ENCODE measurements at regions of chr13 and their contacts with region 1.

Region 1: DNA sequence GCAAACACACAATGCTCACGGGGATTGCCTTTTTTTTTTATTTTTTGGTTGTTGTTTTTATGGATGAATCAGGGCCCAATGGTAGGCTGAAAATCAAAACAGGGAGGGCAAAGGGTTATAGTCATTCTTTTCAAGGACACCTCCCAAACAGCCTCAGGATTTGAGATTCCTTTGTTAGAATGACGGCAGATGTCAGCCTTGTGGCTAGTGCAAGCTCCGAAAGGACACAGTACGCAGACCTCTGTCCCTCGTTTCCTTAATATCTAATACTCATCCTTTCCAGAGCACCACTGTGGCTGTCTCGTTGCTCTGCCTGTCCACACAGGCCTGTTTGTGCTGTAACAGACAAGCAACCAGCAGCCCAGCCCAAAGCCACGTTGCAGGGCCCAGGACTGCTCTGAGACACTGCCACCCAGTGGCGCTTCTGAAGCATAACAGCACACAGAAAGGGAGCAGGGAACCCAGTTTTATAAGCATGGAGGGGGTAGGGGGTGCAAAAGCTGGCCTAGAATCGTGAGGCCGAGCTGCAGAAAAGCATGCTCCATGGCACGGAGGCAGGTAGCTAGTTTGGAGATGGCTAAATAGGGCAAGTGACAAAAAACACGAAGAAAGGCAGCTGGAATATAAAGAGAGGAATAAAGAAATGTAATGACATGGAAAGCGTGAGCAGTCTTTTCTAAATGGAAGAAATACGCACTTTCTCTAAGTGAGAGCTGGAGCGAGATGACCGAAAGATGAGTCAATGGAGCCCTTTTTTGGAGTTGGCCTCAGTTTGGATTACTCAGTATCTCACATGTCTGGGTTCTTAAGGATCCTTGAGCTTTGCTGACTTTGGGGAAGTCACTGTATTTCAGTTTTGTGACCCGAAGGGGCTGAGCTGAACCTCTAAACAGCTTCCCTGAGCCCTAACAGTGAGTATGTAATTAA is 40.7 kb upstream of the MEDAG start:
- DNase-seq: peak; percentile 71 to 72
- H3K4me3 ChIP-seq: no peak overlapping the region
- H3K4me3 Mint-ChIP-seq: no peak overlapping the region
- H3K27ac Mint-ChIP-seq: peak overlapping the region; percentile 16
- H3K4me1 ChIP-seq: 0 out of 2 replicates have a peak, but pooled peaks cover 7% of the 10 kb centered on the region
- H3K4me1 Mint-ChIP-seq: peaks cover 12% of the 10 kb centered on the region
- H3K27me3 ChIP-seq: no peaks in the 10 kb centered on the region
- H3K27me3 Mint-ChIP-seq: peaks cover 2% of the 10 kb centered on the region
- CTCF ChIP-seq: peak; percentile 84 to 95

Region 2: GRCh38 chr13:30493658-30494381 is 371.6 kb before region 1 on chr13:
- CTCF ChIA-PET with region 1: no interaction called
- POLR2A ChIA-PET with region 1: interaction called, 11 read pairs
- intact Hi-C with region 1: no loop called
- DNase-seq: no peak
- H3K4me3 ChIP-seq: no peak overlapping the region
- H3K4me3 Mint-ChIP-seq: no peak overlapping the region
- H3K27ac Mint-ChIP-seq: no peak overlapping the region
- H3K4me1 ChIP-seq: no peaks in the 10 kb centered on the region
- H3K4me1 Mint-ChIP-seq: peaks cover 7% of the 10 kb centered on the region
- H3K27me3 ChIP-seq: no peaks in the 10 kb centered on the region
- H3K27me3 Mint-ChIP-seq: no peaks in the 10 kb centered on the region
- CTCF ChIP-seq: no peak

Region 3: DNA sequence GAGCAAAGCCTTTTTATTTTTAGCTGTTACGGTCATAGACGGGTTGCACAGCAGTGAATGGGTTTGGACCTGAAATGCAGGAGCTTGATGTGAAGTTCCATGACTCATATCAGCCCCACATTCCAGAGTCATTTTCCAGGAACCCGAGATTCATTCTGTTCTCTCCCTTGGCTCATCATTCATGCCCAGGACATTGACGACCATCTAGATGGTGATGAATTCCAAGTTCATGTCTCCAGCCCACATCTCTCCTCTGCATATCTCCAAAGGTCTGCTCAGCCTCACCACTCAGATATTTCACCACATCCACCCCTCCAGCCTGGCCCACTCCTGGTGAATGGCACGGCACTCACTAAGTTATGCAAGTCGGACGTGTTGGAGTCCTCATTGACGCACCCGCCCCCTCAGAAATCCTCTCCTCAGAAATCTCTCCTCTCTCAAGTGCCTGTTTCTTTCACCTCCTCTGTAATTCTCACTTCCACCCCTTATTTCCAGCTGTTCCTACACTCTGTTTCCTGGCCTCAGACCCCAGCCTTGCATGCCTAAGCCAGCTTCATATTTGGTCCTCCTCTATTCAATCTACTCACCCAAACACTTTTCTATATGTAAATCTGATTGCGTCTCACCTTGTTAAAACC is 46.9 kb before region 1 on chr13:
- CTCF ChIA-PET with region 1: no interaction called
- POLR2A ChIA-PET with region 1: no interaction called
- intact Hi-C with region 1: no loop called
- DNase-seq: no peak
- H3K4me3 ChIP-seq: no peak overlapping the region
- H3K4me3 Mint-ChIP-seq: no peak overlapping the region
- H3K27ac Mint-ChIP-seq: no peak overlapping the region
- H3K4me1 ChIP-seq: peaks cover 16% of the 10 kb centered on the region
- H3K4me1 Mint-ChIP-seq: peaks cover 17% of the 10 kb centered on the region
- H3K27me3 ChIP-seq: no peaks in the 10 kb centered on the region; the same call in 1 of the 2 replicates
- H3K27me3 Mint-ChIP-seq: no peaks in the 10 kb centered on the region
- CTCF ChIP-seq: no peak

Region 4: GRCh38 chr13:31044377-31045285 is 179.2 kb after region 1 on chr13:
- CTCF ChIA-PET with region 1: interaction called, 6 read pairs
- POLR2A ChIA-PET with region 1: no interaction called
- intact Hi-C with region 1: loop called (anchors 1 kb)
- DNase-seq: peak; percentile 81 to 87
- H3K4me3 ChIP-seq: no peak overlapping the region
- H3K4me3 Mint-ChIP-seq: no peak overlapping the region
- H3K27ac Mint-ChIP-seq: no peak overlapping the region
- H3K4me1 ChIP-seq: peaks cover 19% of the 10 kb centered on the region
- H3K4me1 Mint-ChIP-seq: no peaks in the 10 kb centered on the region
- H3K27me3 ChIP-seq: no peaks in the 10 kb centered on the region
- H3K27me3 Mint-ChIP-seq: no peaks in the 10 kb centered on the region
- CTCF ChIP-seq: peak; percentile 94 to 97